ENCODE measurements at regions of chr1 and their contacts with region 1.

Region 1: GRCh38 chr1:92858564-92859399 is 26.9 kb downstream of the RPL5 start:
- DNase-seq: peak; percentile 72 to 83 (median 75)
- ATAC-seq: peak; percentile 85
- H3K4me3 ChIP-seq: no peak overlapping the region
- H3K27ac ChIP-seq: no peak overlapping the region
- H3K4me1 ChIP-seq: peaks cover 0 to 7% of the 10 kb centered on the region in 2 experiments; a peak in 1 of 5 replicates
- H3K27me3 ChIP-seq: no peaks in the 10 kb centered on the region
- CTCF ChIP-seq: peak; percentile 93 to 99 (median 98)
- EP300 ChIP-seq: no peak
- POLR2A ChIP-seq: no peak
- RAD21 ChIP-seq: peak; percentile 100

Region 2: DNA sequence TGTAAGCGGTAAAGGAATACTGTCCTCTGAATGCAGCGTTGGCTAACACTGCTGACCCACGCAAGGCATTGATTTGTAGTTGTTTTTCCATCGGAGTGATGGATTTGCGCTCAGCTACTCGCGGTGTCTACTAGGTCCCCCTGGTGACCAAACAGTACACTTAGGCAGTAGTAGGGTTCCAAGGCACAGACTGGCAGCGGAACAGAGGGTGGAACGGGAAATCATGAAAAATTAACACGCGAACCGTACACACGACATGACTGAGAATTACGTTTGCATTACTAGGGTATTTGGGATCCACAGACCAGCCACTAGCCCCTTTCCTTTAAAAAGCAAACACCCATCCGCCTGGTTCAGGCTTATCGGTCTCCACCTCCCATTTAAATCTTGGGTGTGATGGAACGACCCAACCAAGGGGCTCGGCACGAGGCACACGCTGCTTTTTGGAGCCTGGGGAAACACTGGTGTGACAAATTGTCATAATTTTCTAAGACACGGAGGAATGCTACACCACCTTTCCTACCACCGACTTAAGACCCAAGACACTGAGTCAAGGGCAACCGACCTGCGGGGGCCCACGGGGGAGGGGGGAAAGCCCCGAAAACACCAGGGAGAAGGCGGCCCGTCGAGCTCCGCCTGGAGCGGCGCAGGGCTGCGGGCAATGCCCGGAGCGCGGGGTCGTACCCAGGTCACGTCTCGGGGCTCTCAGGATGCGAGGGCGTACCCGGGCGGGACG is 101.8 kb after region 1 on chr1:
- CTCF ChIA-PET with region 1: interaction called, 44 read pairs
- POLR2A ChIA-PET with region 1: interaction called, 3 read pairs
- in situ Hi-C with region 1: no loop called
- intact Hi-C with region 1: loop called (anchors 1 kb)
- DNase-seq: peak; percentile 54 to 72 (median 61)
- ATAC-seq: peak; percentile 70
- H3K4me3 ChIP-seq: peak overlapping the region; percentile 57
- H3K27ac ChIP-seq: no peak overlapping the region
- H3K4me1 ChIP-seq: peaks cover 28% of the 10 kb centered on the region in 2 experiments
- H3K27me3 ChIP-seq: no peaks in the 10 kb centered on the region
- CTCF ChIP-seq: peak; percentile 76 to 79 (median 78)
- EP300 ChIP-seq: no peak
- POLR2A ChIP-seq: no peak
- RAD21 ChIP-seq: peak; percentile 74 to 84

Region 3: DNA sequence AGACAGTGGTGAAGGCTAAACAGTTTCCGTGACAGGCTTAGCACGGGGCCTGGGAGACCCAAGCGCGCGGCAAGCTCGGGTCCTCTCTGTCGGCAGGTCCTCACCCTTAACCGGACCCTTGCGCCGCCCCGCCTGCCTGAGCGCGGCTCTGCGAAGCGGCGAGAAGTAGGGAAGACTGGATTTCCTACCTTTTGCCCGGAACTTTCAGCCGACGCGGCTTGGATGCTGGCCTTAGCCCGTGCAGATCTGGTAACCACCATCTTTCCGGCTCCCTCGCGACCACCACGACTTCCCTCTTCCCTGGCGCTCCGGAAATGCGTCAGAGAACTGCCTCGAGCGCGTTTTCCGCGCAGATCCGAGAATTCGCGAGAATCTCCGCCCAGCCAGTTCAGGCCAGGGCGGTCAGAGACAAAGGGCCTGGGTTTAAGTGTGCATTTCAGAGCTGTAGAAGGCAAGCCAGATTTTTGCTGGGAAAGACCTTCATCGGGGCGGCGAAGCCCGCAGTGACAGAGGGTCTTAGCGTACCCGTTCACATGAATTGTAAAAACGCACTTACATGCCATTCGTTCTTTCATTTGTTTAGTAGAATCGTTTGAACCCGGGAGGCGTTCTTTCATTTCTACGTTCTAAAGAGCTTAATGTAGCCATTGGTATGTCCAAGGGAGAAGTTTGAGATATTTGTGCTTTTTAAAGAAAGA is 1020.3 kb after region 1 on chr1 and contains the start of gene DNTTIP2:
- CTCF ChIA-PET with region 1: no interaction called
- POLR2A ChIA-PET with region 1: no interaction called
- in situ Hi-C with region 1: loop called (anchors 25 kb)
- intact Hi-C with region 1: no loop called
- DNase-seq: peak; percentile 74 to 96 (median 82)
- ATAC-seq: peak; percentile 96
- H3K4me3 ChIP-seq: peak within 1 kb of the TSS; percentile 74
- H3K27ac ChIP-seq: peak within 1 kb of the TSS; percentile 86
- H3K4me1 ChIP-seq: peaks cover 7 to 19% of the 10 kb centered on the region in 2 experiments; a peak in 4 of 5 replicates
- H3K27me3 ChIP-seq: no peaks in the 10 kb centered on the region
- CTCF ChIP-seq: no peak
- EP300 ChIP-seq: peak; percentile 7; the same call in 1 of the 2 replicates
- POLR2A ChIP-seq: peak; percentile 97
- RAD21 ChIP-seq: no peak
- polyA plus RNA-seq, gene DNTTIP2: 113 to 138 TPM